CD4-positive, alpha-beta memory T cell (primary cell): ENCODE measurements at regions of chr9 and their contacts with region 1.

Region 1: DNA sequence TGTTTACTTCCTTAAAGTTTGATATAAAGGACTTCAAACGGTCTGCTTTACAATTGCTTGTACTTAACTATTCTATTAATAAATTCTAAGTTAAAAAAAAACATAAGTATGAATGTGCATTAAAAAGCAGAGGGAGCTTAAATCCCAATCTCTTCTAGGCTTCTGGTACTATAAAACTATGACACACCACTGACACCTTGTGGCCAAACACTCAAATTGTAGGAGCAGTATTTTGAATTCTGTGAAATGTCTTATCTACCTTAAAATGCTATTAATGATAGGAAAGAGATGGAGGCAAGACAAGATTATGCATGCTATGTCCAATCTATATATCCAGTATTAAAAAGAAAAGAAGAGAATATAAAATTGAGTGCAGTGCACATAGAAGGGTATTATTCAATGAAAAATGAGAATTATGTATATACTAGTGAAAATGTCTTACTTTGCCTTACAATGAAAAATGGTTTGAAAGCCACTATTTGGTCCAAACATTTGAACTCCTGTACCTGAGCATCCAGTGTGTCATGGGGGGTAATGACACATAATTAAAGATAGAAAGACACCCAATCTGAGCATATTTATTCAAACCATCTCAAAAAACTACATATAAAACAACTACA is 87.6 kb downstream of the ERP44 start:
- DNase-seq: peak; percentile 35 to 56 (median 43)
- H3K4me3 ChIP-seq: no peak overlapping the region
- H3K4me3 Mint-ChIP-seq: no peak overlapping the region
- H3K27ac ChIP-seq: no peak overlapping the region
- H3K27ac Mint-ChIP-seq: no peak overlapping the region
- H3K4me1 ChIP-seq: no peaks in the 10 kb centered on the region
- H3K4me1 Mint-ChIP-seq: peaks cover 0 to 4% (median under 1%) of the 10 kb centered on the region in 4 donors
- H3K27me3 ChIP-seq: no peaks in the 10 kb centered on the region
- H3K27me3 Mint-ChIP-seq: no peaks in the 10 kb centered on the region

Region 2: DNA sequence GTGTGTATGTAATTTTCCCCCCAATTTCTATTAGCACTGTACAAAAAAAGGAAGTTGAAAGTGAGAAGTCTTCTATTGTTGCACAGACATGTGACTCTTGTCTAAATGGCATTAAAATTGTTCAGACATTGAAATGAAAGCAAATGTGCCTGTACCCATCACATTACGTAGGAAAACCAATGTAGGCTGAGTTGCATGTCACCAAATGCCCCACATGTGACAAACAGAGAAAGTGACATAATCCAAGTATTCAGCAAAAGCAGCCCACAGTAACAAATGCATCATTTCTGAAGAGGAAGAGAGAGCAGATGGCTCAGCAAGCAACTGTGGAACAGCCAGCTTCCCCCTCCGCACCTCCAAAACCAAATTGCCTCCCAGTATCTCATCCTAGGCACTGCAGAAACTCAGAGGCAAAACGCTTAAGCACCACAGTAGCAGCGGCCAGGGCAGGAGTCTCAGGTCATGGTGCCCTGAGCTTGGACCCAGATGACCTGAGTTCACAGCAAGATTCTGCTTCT is 350.9 kb before region 1 on chr9:
- CTCF ChIA-PET with region 1: no interaction called
- POLR2A ChIA-PET with region 1: no interaction called
- intact Hi-C with region 1: no loop called
- DNase-seq: no peak
- H3K4me3 ChIP-seq: no peak overlapping the region
- H3K4me3 Mint-ChIP-seq: no peak overlapping the region
- H3K27ac ChIP-seq: no peak overlapping the region
- H3K27ac Mint-ChIP-seq: no peak overlapping the region
- H3K4me1 ChIP-seq: no peaks in the 10 kb centered on the region
- H3K4me1 Mint-ChIP-seq: no peaks in the 10 kb centered on the region
- H3K27me3 ChIP-seq: no peaks in the 10 kb centered on the region
- H3K27me3 Mint-ChIP-seq: peaks cover 4 to 6% of the 10 kb centered on the region in 2 donors

Region 3: DNA sequence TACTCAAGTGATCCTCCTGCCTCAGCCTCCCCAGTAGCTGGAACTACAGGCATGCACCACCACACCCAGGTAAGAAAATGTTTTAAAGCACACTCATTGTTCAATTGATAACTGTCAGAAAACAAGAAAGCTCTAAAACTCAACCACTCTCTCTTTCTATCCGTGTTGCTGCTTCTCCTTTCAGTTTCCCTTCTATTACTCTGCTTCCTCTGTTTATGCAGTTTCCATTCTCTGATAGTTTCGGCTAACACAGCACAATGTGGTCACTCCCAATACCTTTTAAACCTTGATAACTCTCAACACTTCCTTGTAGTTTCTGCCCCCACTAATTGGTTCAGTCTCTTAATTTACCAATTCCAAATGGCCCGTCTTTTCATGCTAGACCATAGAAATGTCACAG is 248.7 kb before region 1 on chr9:
- CTCF ChIA-PET with region 1: no interaction called
- POLR2A ChIA-PET with region 1: no interaction called
- intact Hi-C with region 1: no loop called
- DNase-seq: no peak
- H3K4me3 ChIP-seq: no peak overlapping the region
- H3K4me3 Mint-ChIP-seq: no peak overlapping the region
- H3K27ac ChIP-seq: no peak overlapping the region
- H3K27ac Mint-ChIP-seq: no peak overlapping the region
- H3K4me1 ChIP-seq: no peaks in the 10 kb centered on the region
- H3K4me1 Mint-ChIP-seq: no peaks in the 10 kb centered on the region
- H3K27me3 ChIP-seq: no peaks in the 10 kb centered on the region
- H3K27me3 Mint-ChIP-seq: peaks cover 4 to 13% of the 10 kb centered on the region in 2 donors

Region 4: DNA sequence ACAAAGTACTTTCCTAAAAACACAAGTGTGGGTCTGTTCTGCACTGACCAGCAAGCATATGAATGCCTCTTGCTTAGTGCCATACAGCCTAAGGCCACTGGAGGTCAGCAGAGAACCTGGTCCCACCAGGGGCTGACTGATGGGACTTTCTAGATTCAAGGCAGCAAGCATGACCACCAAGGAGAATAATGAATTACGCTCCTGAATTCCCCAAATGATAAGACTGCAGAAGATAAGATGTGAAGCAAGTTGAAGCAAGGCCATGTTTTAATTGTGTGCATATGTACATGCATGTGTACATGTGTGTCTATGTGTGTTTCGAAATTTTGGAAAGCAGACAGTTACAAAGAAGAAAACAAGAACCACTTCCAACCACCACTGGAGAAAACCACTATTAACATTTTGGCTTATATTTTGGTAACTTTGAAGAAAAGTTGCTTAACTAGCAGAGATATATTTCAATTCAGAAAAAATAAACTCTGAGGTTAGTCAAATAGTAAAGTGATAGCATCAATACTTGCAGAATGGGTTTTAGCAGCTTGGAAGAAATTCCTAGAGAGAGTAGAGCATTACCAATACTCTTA is 17.1 kb after region 1 on chr9:
- CTCF ChIA-PET with region 1: interaction called, 15 read pairs
- POLR2A ChIA-PET with region 1: no interaction called
- intact Hi-C with region 1: no loop called
- DNase-seq: peak; percentile 47 to 67 (median 58)
- H3K4me3 ChIP-seq: no peak overlapping the region
- H3K4me3 Mint-ChIP-seq: no peak overlapping the region
- H3K27ac ChIP-seq: no peak overlapping the region
- H3K27ac Mint-ChIP-seq: peak overlapping the region in 1 of 7 donors; percentile 57
- H3K4me1 ChIP-seq: no peaks in the 10 kb centered on the region
- H3K4me1 Mint-ChIP-seq: peaks cover 5 to 11% (median 7%) of the 10 kb centered on the region in 4 donors
- H3K27me3 ChIP-seq: no peaks in the 10 kb centered on the region
- H3K27me3 Mint-ChIP-seq: no peaks in the 10 kb centered on the region